CD4-positive, alpha-beta T cell (primary cell): ENCODE measurements at regions of chr17 and their contacts with region 1.

Region 1: DNA sequence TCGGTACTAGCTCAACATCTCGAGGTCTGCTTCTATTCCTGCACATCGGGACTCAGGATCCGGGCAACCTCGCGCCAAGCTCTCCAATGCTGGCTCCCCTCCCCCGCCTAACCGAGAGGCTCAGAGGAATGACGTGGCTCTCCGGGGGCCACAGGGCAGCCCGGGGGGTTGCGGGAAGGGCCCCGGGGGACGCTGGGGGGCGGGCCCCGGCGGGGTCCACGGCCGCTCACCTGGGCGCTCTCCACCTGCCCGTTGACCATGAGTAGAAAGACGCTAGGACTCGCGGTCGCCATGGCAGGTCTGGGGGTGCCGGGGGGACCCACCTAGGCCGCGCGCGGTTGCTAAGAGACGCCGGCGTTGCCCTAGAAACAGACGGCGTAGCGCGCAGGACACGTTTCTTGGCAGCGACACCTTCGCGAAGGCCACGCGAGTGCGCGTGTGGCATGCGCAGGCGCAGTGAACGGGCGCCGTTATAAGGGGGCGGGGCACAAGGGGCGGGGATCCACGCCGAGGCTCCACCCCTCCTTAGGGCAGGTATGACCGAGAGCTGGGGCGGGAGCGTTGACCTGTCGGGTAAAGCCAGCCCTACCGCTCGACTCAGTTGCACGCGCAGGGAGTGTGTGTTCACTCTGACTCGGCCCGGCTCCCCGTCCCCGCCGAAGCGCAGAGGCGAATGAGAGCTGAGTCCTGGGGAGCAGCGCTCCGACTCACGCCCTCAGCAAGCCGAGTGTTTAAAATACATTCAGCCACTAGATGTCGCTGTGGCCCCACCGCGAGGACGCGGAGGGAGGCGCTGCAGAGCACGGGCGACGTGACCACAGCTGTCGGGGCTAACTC is at the start of gene B9D1:
- DNase-seq: peak; percentile 91 to 97 (median 94)
- ATAC-seq: peak; percentile 93
- H3K4me3 ChIP-seq: peak within 1 kb of the TSS; percentile 75
- H3K4me3 Mint-ChIP-seq: peak within 1 kb of the TSS; percentile 95
- H3K27ac ChIP-seq: peak within 1 kb of the TSS in 1 of 2 donors; percentile 29
- H3K27ac Mint-ChIP-seq: peak within 1 kb of the TSS; percentile 89
- H3K4me1 ChIP-seq: peaks cover 16% of the 10 kb centered on the region
- H3K4me1 Mint-ChIP-seq: peaks cover 14% of the 10 kb centered on the region
- H3K27me3 ChIP-seq: peaks cover 3 to 4% of the 10 kb centered on the region in 2 experiments
- H3K27me3 Mint-ChIP-seq: peaks cover 5% of the 10 kb centered on the region
- CTCF ChIP-seq: peak; percentile 99
- total RNA-seq, gene B9D1: 0.66 to 0.73 TPM

Region 2: GRCh38 chr17:19270689-19271611 is 91.5 kb before region 1 on chr17:
- CTCF ChIA-PET with region 1: no interaction called
- POLR2A ChIA-PET with region 1: no interaction called
- intact Hi-C with region 1: no loop called
- DNase-seq: no peak
- ATAC-seq: no peak
- H3K4me3 ChIP-seq: no peak overlapping the region
- H3K4me3 Mint-ChIP-seq: no peak overlapping the region
- H3K27ac ChIP-seq: no peak overlapping the region
- H3K27ac Mint-ChIP-seq: no peak overlapping the region
- H3K4me1 ChIP-seq: no peaks in the 10 kb centered on the region
- H3K4me1 Mint-ChIP-seq: no peaks in the 10 kb centered on the region
- H3K27me3 ChIP-seq: no peaks in the 10 kb centered on the region
- H3K27me3 Mint-ChIP-seq: peaks cover 2% of the 10 kb centered on the region
- CTCF ChIP-seq: no peak

Region 3: DNA sequence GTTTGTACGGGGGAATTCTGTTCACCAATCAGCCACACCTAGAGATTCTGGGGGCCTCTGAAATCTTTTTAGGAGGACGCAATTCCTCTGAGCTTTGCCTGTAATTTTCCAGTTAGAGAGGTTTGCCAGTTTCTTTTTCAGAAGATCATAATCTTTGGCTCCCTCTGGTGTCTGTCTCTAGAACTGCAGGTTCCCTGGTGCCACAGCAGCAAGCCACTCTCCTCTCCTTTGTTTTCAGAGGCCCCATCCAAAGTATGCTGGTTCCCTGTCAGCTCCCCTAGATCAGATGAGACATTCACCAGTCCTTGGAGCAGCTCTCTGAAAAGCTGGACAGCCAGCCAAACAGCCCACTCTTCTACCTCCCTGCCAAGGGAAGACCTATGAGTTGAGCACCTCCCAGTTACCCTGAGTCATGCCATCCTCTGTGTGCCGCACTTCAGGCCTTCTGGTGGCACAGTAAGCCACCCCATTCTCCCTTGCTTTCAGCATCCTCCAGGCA is 84.6 kb after region 1 on chr17:
- CTCF ChIA-PET with region 1: interaction called, 49 read pairs
- POLR2A ChIA-PET with region 1: interaction called, 10 read pairs
- intact Hi-C with region 1: loop called in 1 of 2 experiments (anchors 1 kb)
- DNase-seq: peak; percentile 26 to 85 (median 62)
- ATAC-seq: peak; percentile 59
- H3K4me3 ChIP-seq: no peak overlapping the region
- H3K4me3 Mint-ChIP-seq: no peak overlapping the region
- H3K27ac ChIP-seq: no peak overlapping the region
- H3K27ac Mint-ChIP-seq: no peak overlapping the region
- H3K4me1 ChIP-seq: no peaks in the 10 kb centered on the region
- H3K4me1 Mint-ChIP-seq: no peaks in the 10 kb centered on the region
- H3K27me3 ChIP-seq: no peaks in the 10 kb centered on the region
- H3K27me3 Mint-ChIP-seq: peaks cover 25% of the 10 kb centered on the region
- CTCF ChIP-seq: peak; percentile 96

Region 4: DNA sequence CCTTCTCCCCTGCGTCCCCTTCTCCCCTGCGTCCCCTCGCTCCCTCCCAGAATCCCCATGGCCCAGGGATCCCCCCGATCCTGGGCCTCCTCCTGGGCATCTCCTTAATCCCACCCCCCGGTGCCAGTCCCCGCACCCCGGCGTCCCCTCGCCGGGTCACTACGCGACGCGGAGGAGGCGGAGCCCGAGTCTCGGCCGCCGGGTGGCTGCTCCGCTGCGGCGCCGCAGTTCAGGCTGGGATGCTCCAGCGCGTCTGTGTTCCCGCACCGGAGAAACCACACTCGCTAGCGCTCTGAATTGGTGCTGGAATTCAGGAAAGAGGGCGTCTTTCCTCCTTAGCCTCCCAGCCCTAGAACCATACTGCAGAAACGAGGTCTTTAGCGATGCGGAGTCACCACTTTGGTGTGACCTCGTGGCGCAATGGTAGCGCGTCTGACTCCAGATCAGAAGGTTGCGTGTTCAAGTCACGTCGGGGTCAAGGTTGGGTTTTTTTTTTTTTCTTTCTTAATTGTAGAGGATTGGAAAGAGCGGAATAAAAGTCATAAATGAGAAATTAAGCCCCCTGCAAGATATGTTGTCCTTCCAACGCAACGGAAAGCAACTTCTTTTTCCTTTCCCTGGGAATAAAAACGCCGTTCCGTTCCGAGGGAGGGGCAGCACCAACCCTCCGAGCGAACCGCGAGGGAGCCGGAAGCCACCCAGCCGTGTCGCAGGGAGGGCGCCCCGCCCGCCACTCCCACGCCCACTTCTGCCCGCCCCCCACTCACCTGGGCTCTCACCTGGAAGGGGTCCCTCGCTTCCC is 145.5 kb after region 1 on chr17:
- CTCF ChIA-PET with region 1: interaction called, 4 read pairs
- POLR2A ChIA-PET with region 1: no interaction called
- intact Hi-C with region 1: loop called (anchors 2 to 5 kb)
- DNase-seq: peak; percentile 78 to 93 (median 88)
- ATAC-seq: peak; percentile 75
- H3K4me3 ChIP-seq: peak overlapping the region; percentile 80
- H3K4me3 Mint-ChIP-seq: peak overlapping the region; percentile 95
- H3K27ac ChIP-seq: peak overlapping the region; percentile 26 to 53
- H3K27ac Mint-ChIP-seq: peak overlapping the region; percentile 97
- H3K4me1 ChIP-seq: peaks cover 14% of the 10 kb centered on the region
- H3K4me1 Mint-ChIP-seq: peaks cover 10% of the 10 kb centered on the region
- H3K27me3 ChIP-seq: no peaks in the 10 kb centered on the region
- H3K27me3 Mint-ChIP-seq: peaks cover 11% of the 10 kb centered on the region
- CTCF ChIP-seq: no peak

Region 5: DNA sequence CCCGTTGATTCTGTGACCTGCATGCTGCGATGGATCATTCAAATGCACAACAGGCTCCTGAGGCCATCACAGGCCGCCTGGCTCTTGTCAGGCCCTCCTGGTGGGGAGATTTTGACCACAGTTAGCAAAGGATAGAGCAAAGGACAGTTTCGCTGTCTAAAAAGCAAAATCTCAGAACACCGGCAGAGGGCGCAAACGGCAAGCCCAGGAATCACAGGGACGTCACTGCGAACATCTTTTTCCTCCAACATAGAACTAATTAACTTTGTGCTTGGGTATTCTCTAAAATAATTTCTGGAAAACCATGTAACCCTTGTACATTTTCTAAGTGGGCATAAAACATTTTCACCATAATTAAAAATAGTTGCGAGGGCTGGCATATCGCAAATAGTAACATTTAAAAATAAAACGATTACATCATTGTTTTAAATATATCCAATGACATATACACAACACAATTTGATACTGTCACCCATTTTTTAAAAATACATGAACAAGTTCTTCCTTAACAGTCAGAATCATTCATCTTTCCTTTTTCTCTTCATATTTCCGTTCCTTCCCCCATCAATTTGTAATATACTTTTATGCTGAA is 151.5 kb after region 1 on chr17:
- CTCF ChIA-PET with region 1: interaction called, 4 read pairs
- POLR2A ChIA-PET with region 1: no interaction called
- intact Hi-C with region 1: loop called (anchors 2 to 5 kb)
- DNase-seq: peak; percentile 42 to 84 (median 62)
- ATAC-seq: peak; percentile 75
- H3K4me3 ChIP-seq: no peak overlapping the region
- H3K4me3 Mint-ChIP-seq: no peak overlapping the region
- H3K27ac ChIP-seq: no peak overlapping the region
- H3K27ac Mint-ChIP-seq: peak overlapping the region; percentile 12
- H3K4me1 ChIP-seq: peaks cover 4% of the 10 kb centered on the region
- H3K4me1 Mint-ChIP-seq: peaks cover 6% of the 10 kb centered on the region
- H3K27me3 ChIP-seq: no peaks in the 10 kb centered on the region
- H3K27me3 Mint-ChIP-seq: no peaks in the 10 kb centered on the region
- CTCF ChIP-seq: peak; percentile 94

Region 6: GRCh38 chr17:19596869-19597268 is 234.4 kb after region 1 on chr17:
- CTCF ChIA-PET with region 1: no interaction called
- POLR2A ChIA-PET with region 1: no interaction called
- intact Hi-C with region 1: no loop called
- DNase-seq: no peak
- ATAC-seq: no peak
- H3K4me3 ChIP-seq: no peak overlapping the region
- H3K4me3 Mint-ChIP-seq: no peak overlapping the region
- H3K27ac ChIP-seq: no peak overlapping the region
- H3K27ac Mint-ChIP-seq: no peak overlapping the region
- H3K4me1 ChIP-seq: no peaks in the 10 kb centered on the region
- H3K4me1 Mint-ChIP-seq: no peaks in the 10 kb centered on the region
- H3K27me3 ChIP-seq: peaks cover 0 to 9% of the 10 kb centered on the region in 2 experiments
- H3K27me3 Mint-ChIP-seq: peaks cover 8% of the 10 kb centered on the region
- CTCF ChIP-seq: no peak

Region 7: DNA sequence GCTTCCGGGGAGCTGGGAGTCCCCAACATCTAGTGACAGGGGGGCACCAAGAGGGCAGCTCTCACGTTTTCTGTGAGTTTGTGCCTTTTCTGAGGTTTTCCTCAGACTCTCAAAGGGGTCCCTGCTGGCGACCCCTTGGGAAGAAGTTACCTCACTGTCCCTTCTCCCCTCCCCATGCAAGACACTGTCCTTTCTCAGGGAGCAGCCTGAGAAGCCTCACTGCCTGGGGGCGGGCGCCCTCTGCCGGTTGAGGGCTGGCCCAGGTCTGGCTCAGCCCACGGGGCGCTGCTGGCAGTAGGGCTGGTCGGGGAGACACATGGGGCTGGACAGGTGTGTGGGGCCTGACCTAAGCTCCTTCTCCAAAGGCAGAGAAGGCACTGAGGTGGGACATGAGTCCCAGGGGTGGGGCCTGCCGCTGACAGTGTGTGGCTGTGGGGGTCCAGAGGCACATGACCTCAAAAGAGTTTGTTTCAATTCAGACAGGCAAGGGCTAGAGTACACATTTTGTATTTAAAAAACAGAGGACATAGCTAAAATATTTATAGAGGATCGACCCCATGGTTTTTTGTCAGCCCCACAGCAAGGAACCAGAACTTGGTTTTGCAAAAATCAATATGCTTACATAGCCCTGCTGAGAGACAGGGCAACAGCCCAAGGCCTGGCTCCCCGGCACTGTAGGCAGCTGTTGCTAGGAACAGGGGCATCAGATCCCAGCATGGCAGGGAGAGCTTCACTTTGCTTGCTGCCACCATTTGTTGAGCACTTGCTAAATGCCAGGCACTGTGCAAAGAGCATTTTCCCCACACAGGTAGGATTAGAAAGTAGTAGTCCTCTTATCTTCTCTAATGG is 404.2 kb after region 1 on chr17:
- CTCF ChIA-PET with region 1: interaction called, 10 read pairs
- POLR2A ChIA-PET with region 1: no interaction called
- intact Hi-C with region 1: loop called (anchors 1 to 2 kb)
- DNase-seq: peak; percentile 62 to 89 (median 78)
- ATAC-seq: peak; percentile 80
- H3K4me3 ChIP-seq: no peak overlapping the region
- H3K4me3 Mint-ChIP-seq: peak overlapping the region; percentile 17
- H3K27ac ChIP-seq: no peak overlapping the region
- H3K27ac Mint-ChIP-seq: peak overlapping the region; percentile 84
- H3K4me1 ChIP-seq: peaks cover 54% of the 10 kb centered on the region
- H3K4me1 Mint-ChIP-seq: peaks cover 52% of the 10 kb centered on the region
- H3K27me3 ChIP-seq: no peaks in the 10 kb centered on the region
- H3K27me3 Mint-ChIP-seq: no peaks in the 10 kb centered on the region
- CTCF ChIP-seq: peak; percentile 97